Prostate gland (tissue), 2 donors: ENCODE measurements at regions of chr13 and their contacts with region 1.

Region 1: GRCh38 chr13:50829896-50830295 is 13.6 kb downstream of the DLEU7 start:
- DNase-seq: no peak
- H3K4me3 ChIP-seq: no peak overlapping the region
- H3K27ac ChIP-seq: no peak overlapping the region
- H3K4me1 ChIP-seq: no peaks in the 10 kb centered on the region
- H3K27me3 ChIP-seq: no peaks in the 10 kb centered on the region
- CTCF ChIP-seq: no peak
- POLR2A ChIP-seq: no peak

Region 2: GRCh38 chr13:50672018-50672417 is 157.9 kb before region 1 on chr13:
- intact Hi-C with region 1: no loop called
- DNase-seq: no peak
- H3K4me3 ChIP-seq: no peak overlapping the region
- H3K27ac ChIP-seq: no peak overlapping the region
- H3K4me1 ChIP-seq: no peaks in the 10 kb centered on the region
- H3K27me3 ChIP-seq: no peaks in the 10 kb centered on the region
- CTCF ChIP-seq: no peak
- POLR2A ChIP-seq: no peak

Region 3: GRCh38 chr13:50873467-50873866 is 43.6 kb after region 1 on chr13:
- intact Hi-C with region 1: loop called (anchors 2 kb)
- DNase-seq: no peak
- H3K4me3 ChIP-seq: no peak overlapping the region
- H3K27ac ChIP-seq: no peak overlapping the region
- H3K4me1 ChIP-seq: no peaks in the 10 kb centered on the region
- H3K27me3 ChIP-seq: no peaks in the 10 kb centered on the region
- CTCF ChIP-seq: no peak
- POLR2A ChIP-seq: no peak

Region 4: GRCh38 chr13:51112771-51113170 is 282.9 kb after region 1 on chr13:
- intact Hi-C with region 1: no loop called
- DNase-seq: no peak
- H3K4me3 ChIP-seq: no peak overlapping the region
- H3K27ac ChIP-seq: no peak overlapping the region
- H3K4me1 ChIP-seq: no peaks in the 10 kb centered on the region
- H3K27me3 ChIP-seq: no peaks in the 10 kb centered on the region
- CTCF ChIP-seq: no peak
- POLR2A ChIP-seq: no peak